ENCODE measurements at regions of chr11 and their contacts with region 1.

Region 1: DNA sequence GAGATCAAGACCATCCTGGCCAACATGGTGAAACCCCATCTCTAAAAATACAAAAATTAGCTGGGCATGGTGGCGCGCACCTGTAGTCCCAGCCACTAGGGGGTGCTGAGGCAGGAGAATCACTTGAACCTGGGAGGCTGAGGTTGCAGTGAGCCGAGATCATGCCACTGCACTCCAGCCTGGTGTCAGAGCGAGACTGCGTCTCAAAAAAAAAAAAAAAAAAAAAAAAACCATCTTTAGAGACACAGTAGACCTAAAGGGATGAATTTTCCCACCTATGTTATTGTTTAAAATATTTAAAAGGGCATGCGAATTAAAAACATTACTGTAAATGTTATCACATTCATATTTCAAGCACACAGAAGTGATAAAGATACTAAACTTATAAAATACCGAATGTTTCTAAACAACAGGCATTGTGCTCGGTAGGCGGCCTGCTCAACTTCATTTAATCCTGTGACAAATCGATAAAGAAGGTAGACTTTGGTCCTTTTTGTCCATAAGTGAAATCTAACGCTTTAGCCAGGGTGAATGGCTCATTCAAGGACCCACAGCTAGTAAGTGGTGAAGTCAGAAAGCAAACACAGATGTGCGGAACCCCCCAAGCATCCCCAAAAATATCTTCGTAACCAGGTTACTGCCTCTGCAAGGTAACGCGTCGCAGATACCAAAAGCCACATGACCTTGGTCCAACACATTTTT is 16.1 kb downstream of the NCAPD3 start:
- DNase-seq: peak; percentile 54 to 69 (median 64)
- H3K4me3 ChIP-seq: no peak overlapping the region
- H3K4me3 Mint-ChIP-seq: no peak overlapping the region
- H3K27ac ChIP-seq: no peak overlapping the region
- H3K27ac Mint-ChIP-seq: peak overlapping the region in 4 of 7 donors; percentile 17 to 24 (median 22)
- H3K4me1 ChIP-seq: no peaks in the 10 kb centered on the region
- H3K4me1 Mint-ChIP-seq: peaks cover 1 to 7% (median 5%) of the 10 kb centered on the region in 4 donors
- H3K27me3 ChIP-seq: no peaks in the 10 kb centered on the region
- H3K27me3 Mint-ChIP-seq: no peaks in the 10 kb centered on the region

Region 2: GRCh38 chr11:134196756-134197155 is 10.9 kb before region 1 on chr11:
- CTCF ChIA-PET with region 1: interaction called, 11 read pairs
- POLR2A ChIA-PET with region 1: no interaction called
- intact Hi-C with region 1: no loop called
- DNase-seq: peak in 4 of 5 donors; percentile 9 to 31 (median 21)
- H3K4me3 ChIP-seq: no peak overlapping the region
- H3K4me3 Mint-ChIP-seq: peak overlapping the region in 7 of 8 donors; percentile 40 to 82 (median 49)
- H3K27ac ChIP-seq: no peak overlapping the region
- H3K27ac Mint-ChIP-seq: peak overlapping the region in 6 of 7 donors; percentile 76 to 96 (median 84)
- H3K4me1 ChIP-seq: peaks cover 3% of the 10 kb centered on the region
- H3K4me1 Mint-ChIP-seq: peaks cover 6 to 10% (median 8%) of the 10 kb centered on the region in 4 donors
- H3K27me3 ChIP-seq: no peaks in the 10 kb centered on the region
- H3K27me3 Mint-ChIP-seq: no peaks in the 10 kb centered on the region

Region 3: DNA sequence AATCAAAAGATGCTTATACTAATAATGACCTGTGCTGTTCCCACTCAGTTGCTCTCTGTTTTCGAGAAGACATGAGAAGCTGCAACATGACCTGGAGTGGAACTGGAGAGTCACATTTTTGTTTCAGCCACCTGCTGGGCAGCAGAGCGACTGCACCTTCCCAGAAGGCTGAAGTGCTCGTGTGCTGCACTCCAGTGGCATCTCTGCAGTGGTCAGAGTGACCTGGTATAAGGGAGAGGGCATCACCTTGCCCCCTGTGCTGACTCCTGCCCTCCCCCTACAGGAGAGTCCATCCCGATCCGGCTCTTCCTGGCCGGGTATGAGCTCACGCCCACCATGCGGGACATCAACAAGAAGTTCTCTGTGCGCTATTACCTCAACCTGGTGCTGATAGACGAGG is 37.0 kb after region 1 on chr11:
- CTCF ChIA-PET with region 1: interaction called, 4 read pairs
- POLR2A ChIA-PET with region 1: no interaction called
- intact Hi-C with region 1: loop called (anchors 1 kb)
- DNase-seq: peak in 2 of 5 donors; percentile 17 to 19
- H3K4me3 ChIP-seq: no peak overlapping the region
- H3K4me3 Mint-ChIP-seq: no peak overlapping the region
- H3K27ac ChIP-seq: no peak overlapping the region
- H3K27ac Mint-ChIP-seq: peak overlapping the region in 1 of 7 donors; percentile 43
- H3K4me1 ChIP-seq: no peaks in the 10 kb centered on the region
- H3K4me1 Mint-ChIP-seq: no peaks in the 10 kb centered on the region
- H3K27me3 ChIP-seq: no peaks in the 10 kb centered on the region
- H3K27me3 Mint-ChIP-seq: no peaks in the 10 kb centered on the region

Region 4: DNA sequence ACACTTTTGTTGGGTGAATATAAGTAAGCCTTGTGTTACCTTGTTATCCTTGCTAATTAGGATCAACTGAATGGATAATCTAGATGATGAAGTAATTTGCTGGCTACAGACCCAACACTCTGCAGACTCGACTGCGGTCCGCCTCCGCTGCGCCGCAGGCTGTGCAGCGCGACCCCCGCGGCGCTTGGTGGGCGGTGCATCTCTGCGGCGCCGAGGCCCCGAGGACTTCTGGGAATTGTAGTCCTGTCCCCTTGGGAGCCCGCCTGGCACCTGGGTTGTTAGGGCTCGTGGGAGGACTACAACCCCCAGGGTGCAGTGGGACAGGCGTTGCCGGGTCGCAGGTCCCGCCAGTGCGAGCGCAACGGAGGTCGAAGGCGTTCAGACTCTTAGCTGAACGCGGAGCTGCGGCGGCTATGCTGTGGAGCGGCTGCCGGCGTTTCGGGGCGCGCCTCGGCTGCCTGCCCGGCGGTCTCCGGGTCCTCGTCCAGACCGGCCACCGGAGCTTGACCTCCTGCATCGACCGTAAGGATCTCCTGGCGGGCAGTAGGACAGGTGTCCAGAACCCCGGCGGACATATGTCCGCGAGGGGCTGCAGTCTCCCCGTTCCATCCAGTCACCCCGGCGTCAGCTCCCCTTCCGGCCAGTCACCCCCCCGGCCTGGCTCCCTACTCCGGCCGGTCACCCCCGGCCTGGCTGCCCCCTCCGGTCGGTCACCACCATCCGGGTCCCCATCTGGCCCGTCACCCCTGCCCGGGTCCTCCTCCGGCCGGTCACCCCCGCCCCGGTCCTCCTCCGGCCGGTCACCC is 45.7 kb after region 1 on chr11 and contains the starts of genes ACAD8 and THYN1:
- CTCF ChIA-PET with region 1: interaction called, 15 read pairs
- POLR2A ChIA-PET with region 1: no interaction called
- intact Hi-C with region 1: no loop called
- DNase-seq: peak; percentile 94 to 97 (median 95)
- H3K4me3 ChIP-seq: peak within 1 kb of the TSS; percentile 71 to 93
- H3K4me3 Mint-ChIP-seq: peak within 1 kb of the TSS; percentile 91 to 96 (median 94)
- H3K27ac ChIP-seq: peak within 1 kb of the TSS; percentile 62
- H3K27ac Mint-ChIP-seq: peak within 1 kb of the TSS; percentile 54 to 91 (median 89)
- H3K4me1 ChIP-seq: peaks cover 30% of the 10 kb centered on the region
- H3K4me1 Mint-ChIP-seq: peaks cover 21 to 43% (median 34%) of the 10 kb centered on the region in 4 donors
- H3K27me3 ChIP-seq: no peaks in the 10 kb centered on the region
- H3K27me3 Mint-ChIP-seq: no peaks in the 10 kb centered on the region
- total RNA-seq, gene ACAD8: 36.9 to 38.6 TPM
- total RNA-seq, gene THYN1: 59.3 to 70.8 TPM

Region 5: GRCh38 chr11:134275534-134276395 is 68.1 kb after region 1 on chr11 and contains the start of gene GLB1L3:
- CTCF ChIA-PET with region 1: interaction called, 16 read pairs
- POLR2A ChIA-PET with region 1: no interaction called
- intact Hi-C with region 1: loop called (anchors 1 kb)
- DNase-seq: peak; percentile 77 to 85 (median 79)
- H3K4me3 ChIP-seq: peak within 1 kb of the TSS; percentile 85 to 87
- H3K4me3 Mint-ChIP-seq: peak within 1 kb of the TSS; percentile 93 to 98 (median 96)
- H3K27ac ChIP-seq: peak within 1 kb of the TSS; percentile 61
- H3K27ac Mint-ChIP-seq: peak within 1 kb of the TSS; percentile 82 to 95 (median 91)
- H3K4me1 ChIP-seq: peaks cover 37% of the 10 kb centered on the region
- H3K4me1 Mint-ChIP-seq: peaks cover 23 to 57% (median 41%) of the 10 kb centered on the region in 4 donors
- H3K27me3 ChIP-seq: no peaks in the 10 kb centered on the region
- H3K27me3 Mint-ChIP-seq: no peaks in the 10 kb centered on the region
- total RNA-seq, gene GLB1L3: 1.2 to 1.5 TPM

Measured in CD4-positive, alpha-beta memory T cell (primary cell).